ENCODE measurements at regions of chrX and their contacts with region 1.

Region 1: GRCh38 chrX:149124526-149125108 is 380.5 kb downstream of the IDS start:
- DNase-seq: no peak
- ATAC-seq: no peak
- H3K4me3 ChIP-seq: no peak overlapping the region
- H3K27ac ChIP-seq: no peak overlapping the region
- H3K4me1 ChIP-seq: no peaks in the 10 kb centered on the region
- H3K27me3 ChIP-seq: no peaks in the 10 kb centered on the region
- CTCF ChIP-seq: no peak

Region 2: DNA sequence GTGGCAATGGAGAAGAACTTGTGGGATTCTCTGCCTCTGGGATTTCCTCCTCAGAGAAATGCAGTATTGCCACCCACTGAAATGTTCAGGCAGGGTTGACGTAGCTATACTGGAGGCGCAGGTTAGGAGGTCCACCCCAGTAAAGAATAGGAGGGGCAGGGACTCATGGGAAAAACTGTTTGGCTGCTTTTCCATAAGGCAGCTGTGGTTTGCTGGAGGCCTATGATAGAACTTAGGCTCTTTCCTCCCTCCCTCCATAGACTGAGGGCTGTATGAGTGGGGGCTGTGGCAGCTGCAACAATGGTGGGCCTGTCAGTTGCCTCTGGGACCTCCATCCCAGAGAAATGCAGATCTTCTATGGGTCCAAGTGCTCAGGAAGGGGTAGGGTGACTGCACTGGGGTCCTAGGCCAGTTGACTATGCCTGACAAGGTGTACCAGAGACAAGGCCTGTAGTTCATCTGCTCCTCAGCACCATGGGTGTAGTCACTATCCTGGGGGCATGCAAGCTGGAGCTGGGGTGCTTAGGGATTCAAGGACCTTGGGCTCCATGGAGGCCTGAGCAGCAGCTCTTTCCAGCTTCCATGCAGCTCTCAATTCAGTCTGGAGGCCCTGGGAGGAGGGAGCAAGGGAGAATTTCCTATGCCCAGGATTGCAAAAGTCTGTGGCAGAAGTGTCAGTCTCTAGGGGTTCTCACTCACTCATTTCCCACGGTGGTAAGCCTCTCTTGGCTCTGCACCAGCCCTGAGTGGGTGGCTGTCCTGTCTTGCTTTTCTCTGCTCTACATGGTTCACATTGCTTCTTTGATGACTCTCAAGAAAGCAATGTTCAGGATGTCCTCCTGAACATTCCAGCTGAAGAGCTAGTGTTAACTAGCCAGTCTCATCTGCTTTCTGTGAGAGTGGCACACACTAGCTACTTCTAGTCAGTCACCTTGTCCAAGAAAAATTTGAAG is 27.5 kb after region 1 on chrX:
- intact Hi-C with region 1: loop called in 1 of 10 experiments (anchors 1 kb)
- DNase-seq: no peak
- ATAC-seq: peak in 3 of 8 donors; percentile 35 to 63 (median 45)
- H3K4me3 ChIP-seq: no peak overlapping the region
- H3K27ac ChIP-seq: no peak overlapping the region
- H3K4me1 ChIP-seq: no peaks in the 10 kb centered on the region
- H3K27me3 ChIP-seq: no peaks in the 10 kb centered on the region
- CTCF ChIP-seq: no peak